ENCODE measurements at regions of chr11 and their contacts with region 1.

Region 1: DNA sequence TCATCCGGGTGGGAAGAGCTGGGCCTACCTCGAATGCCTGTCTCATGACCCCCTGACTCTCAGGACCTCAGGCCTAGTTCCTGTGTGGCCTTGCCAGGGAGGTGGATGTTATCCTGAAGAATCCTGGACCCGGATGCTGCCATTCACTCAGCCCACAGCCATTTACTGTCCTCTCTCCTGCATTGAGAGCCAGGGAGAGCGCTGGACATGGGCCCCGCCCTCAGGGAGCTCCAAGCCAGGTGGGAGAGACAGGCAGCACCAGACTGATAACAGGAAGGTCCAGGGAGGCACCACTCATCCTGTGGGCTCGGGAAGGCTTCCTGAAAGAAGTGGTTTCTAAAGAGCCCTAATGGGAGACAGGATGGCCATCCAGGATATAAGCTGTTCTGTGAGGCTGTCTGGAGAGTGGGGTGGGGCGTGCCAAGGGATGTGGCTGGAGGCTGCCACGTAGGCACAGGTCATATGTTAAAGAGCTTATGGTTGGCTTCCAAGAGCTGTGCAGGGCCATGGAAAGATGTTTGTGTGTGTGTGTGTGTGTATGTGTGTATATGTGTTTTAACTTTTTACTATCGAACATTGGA is 8.6 kb downstream of the SERPINH1 start:
- DNase-seq: no peak

Region 2: DNA sequence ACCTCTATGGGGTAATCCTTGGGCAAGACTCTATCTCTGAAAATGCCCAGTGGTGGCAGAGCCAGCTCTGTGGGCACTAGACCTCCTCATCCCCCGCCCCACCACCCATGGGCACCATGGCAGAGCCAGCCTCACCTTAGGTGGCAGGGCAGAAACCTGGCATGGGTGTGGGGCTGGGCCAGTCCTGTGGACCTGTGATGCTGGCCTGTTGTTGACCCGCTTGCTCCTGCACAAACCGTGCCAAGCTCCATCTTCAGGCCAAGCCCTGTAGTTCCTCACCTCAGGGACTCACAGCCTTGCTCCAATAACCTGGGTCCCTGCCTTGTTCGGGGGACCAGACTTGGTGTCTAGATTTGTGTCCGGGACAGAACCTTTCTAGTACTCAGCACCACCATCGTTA is 17.5 kb before region 1 on chr11:
- intact Hi-C with region 1: loop called (anchors 2 kb)
- DNase-seq: no peak